Body of pancreas (tissue), 4 donors: ENCODE measurements at regions of chr9 and their contacts with region 1.

Region 1: GRCh38 chr9:128733256-128733655 is 9.3 kb upstream of the ZDHHC12 start:
- DNase-seq: peak; percentile 83 to 89 (median 86)
- ATAC-seq: peak; percentile 93
- H3K4me3 ChIP-seq: no peak overlapping the region
- H3K27ac ChIP-seq: peak overlapping the region; percentile 15 to 78 (median 68)
- H3K4me1 ChIP-seq: peaks cover 8% of the 10 kb centered on the region
- H3K27me3 ChIP-seq: no peaks in the 10 kb centered on the region
- CTCF ChIP-seq: peak; percentile 56 to 77 (median 72)
- POLR2A ChIP-seq: peak in 1 of 3 donors; percentile 17

Region 2: GRCh38 chr9:128829477-128830251 is 96.4 kb after region 1 on chr9 and contains the start of gene SPOUT1:
- intact Hi-C with region 1: loop called (anchors 10 kb)
- DNase-seq: peak; percentile 94 to 95 (median 95)
- ATAC-seq: peak; percentile 99
- H3K4me3 ChIP-seq: peak within 1 kb of the TSS; percentile 83 to 85
- H3K27ac ChIP-seq: peak within 1 kb of the TSS; percentile 3 to 79 (median 64)
- H3K4me1 ChIP-seq: peaks cover 19% of the 10 kb centered on the region
- H3K27me3 ChIP-seq: no peaks in the 10 kb centered on the region
- CTCF ChIP-seq: no peak
- POLR2A ChIP-seq: peak in 2 of 3 donors; percentile 66 to 74
- total RNA-seq, gene SPOUT1: 16.2 to 16.3 TPM